Panc1 (cell line): ENCODE measurements at regions of chr17 and their contacts with region 1.

Region 1: GRCh38 chr17:3048767-3049471 is 14.5 kb downstream of the OR1D5 start:
- DNase-seq: peak; percentile 93
- ATAC-seq: peak; percentile 100
- H3K4me3 ChIP-seq: peak overlapping the region; percentile 62 to 76
- H3K27ac ChIP-seq: peak overlapping the region; percentile 77
- H3K4me1 ChIP-seq: peaks cover 3% of the 10 kb centered on the region; the same call in 1 of the 2 replicates
- H3K27me3 ChIP-seq: no peaks in the 10 kb centered on the region
- CTCF ChIP-seq: peak; percentile 92

Region 2: GRCh38 chr17:3647769-3648555 is 599.0 kb after region 1 on chr17:
- CTCF ChIA-PET with region 1: interaction called, 3 read pairs
- POLR2A ChIA-PET with region 1: no interaction called
- in situ Hi-C with region 1: no loop called
- intact Hi-C with region 1: loop called (anchors 5 kb)
- DNase-seq: no peak
- ATAC-seq: peak; percentile 95
- H3K4me3 ChIP-seq: no peak overlapping the region
- H3K27ac ChIP-seq: no peak overlapping the region
- H3K4me1 ChIP-seq: no peaks in the 10 kb centered on the region
- H3K27me3 ChIP-seq: no peaks in the 10 kb centered on the region
- CTCF ChIP-seq: peak; percentile 83